CD14-positive monocyte (primary cell): ENCODE measurements at regions of chr6 and their contacts with region 1.

Region 1: GRCh38 chr6:118770112-118770788 is 118.9 kb upstream of the CEP85L start:
- DNase-seq: no peak
- H3K4me3 ChIP-seq: no peak overlapping the region
- H3K4me3 Mint-ChIP-seq: no peak overlapping the region
- H3K27ac ChIP-seq: peak overlapping the region in 1 of 2 donors; percentile 73
- H3K27ac Mint-ChIP-seq: peak overlapping the region; percentile 20 to 95 (median 86)
- H3K4me1 ChIP-seq: peaks cover 58 to 61% of the 10 kb centered on the region in 2 donors
- H3K4me1 Mint-ChIP-seq: peaks cover 58% of the 10 kb centered on the region
- H3K27me3 ChIP-seq: no peaks in the 10 kb centered on the region
- H3K27me3 Mint-ChIP-seq: peaks cover 0 to 2% (median 0%) of the 10 kb centered on the region in 3 donors
- CTCF ChIP-seq: no peak

Region 2: DNA sequence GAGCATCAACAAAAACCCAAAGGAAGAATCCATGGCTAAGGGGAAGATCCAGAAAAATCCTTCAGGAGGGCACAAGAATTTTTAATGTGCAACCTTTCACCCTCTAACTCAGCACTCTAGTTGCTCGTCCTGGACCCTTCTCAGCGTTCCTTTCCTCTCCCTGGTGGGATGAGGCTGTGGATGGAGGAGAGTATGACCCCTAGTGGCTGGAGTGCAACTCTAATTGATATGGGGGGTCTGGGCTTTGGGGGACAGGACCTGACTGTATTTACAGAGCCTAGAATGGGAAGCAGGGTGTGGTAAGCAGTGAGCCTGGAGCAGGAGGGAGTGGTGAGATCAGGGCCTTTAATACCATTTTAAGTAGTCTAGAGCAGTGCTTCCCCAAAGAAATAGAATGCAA is 34.9 kb before region 1 on chr6:
- intact Hi-C with region 1: loop called in 1 of 2 experiments (anchors 5 kb)
- DNase-seq: no peak
- H3K4me3 ChIP-seq: no peak overlapping the region
- H3K4me3 Mint-ChIP-seq: no peak overlapping the region
- H3K27ac ChIP-seq: no peak overlapping the region
- H3K27ac Mint-ChIP-seq: no peak overlapping the region
- H3K4me1 ChIP-seq: peaks cover 13 to 26% of the 10 kb centered on the region in 2 donors
- H3K4me1 Mint-ChIP-seq: peaks cover 32% of the 10 kb centered on the region
- H3K27me3 ChIP-seq: no peaks in the 10 kb centered on the region
- H3K27me3 Mint-ChIP-seq: peaks cover 0 to 1% (median 0%) of the 10 kb centered on the region in 3 donors
- CTCF ChIP-seq: no peak

Region 3: GRCh38 chr6:118810420-118811027 is 40.3 kb after region 1 on chr6:
- intact Hi-C with region 1: no loop called
- DNase-seq: peak in 2 of 3 donors; percentile 45
- H3K4me3 ChIP-seq: no peak overlapping the region
- H3K4me3 Mint-ChIP-seq: peak overlapping the region; percentile 56 to 71
- H3K27ac ChIP-seq: peak overlapping the region in 1 of 2 donors; percentile 38
- H3K27ac Mint-ChIP-seq: peak overlapping the region in 6 of 7 donors; percentile 37 to 82 (median 56)
- H3K4me1 ChIP-seq: peaks cover 21 to 33% of the 10 kb centered on the region in 2 donors
- H3K4me1 Mint-ChIP-seq: peaks cover 49% of the 10 kb centered on the region
- H3K27me3 ChIP-seq: no peaks in the 10 kb centered on the region
- H3K27me3 Mint-ChIP-seq: peaks cover 0 to 2% (median 1%) of the 10 kb centered on the region in 3 donors
- CTCF ChIP-seq: no peak